Adrenal gland (tissue), 19 donors: ENCODE measurements at regions of chr1 and their contacts with region 1.

Region 1: DNA sequence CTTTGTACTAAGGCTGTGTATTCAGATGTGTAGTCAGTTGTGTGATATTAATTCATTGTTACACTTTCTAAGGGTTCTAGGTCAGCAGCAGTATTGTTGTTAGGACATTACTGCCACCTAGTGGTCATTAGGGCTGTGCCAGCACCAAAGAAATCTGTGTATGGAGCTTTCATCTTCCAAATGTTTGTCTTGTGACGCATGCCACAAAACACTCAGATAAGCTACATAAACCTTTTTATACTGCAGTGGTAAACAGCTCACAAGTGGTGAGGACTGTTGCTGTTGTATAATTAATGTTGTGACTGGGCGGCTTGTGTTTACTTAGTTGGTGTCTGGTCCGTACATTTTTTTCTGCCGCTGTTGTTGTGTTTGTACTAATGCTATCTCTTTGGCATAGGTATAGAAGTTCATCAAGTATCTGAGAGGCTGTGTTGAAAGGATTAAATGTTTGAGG is 51.7 kb downstream of the S1PR1 start:
- DNase-seq: peak; percentile 72 to 92 (median 77)
- H3K4me3 ChIP-seq: no peak overlapping the region
- H3K27ac ChIP-seq: no peak overlapping the region
- H3K4me1 ChIP-seq: peaks cover 0 to 12% of the 10 kb centered on the region in 2 donors
- H3K27me3 ChIP-seq: no peaks in the 10 kb centered on the region
- CTCF ChIP-seq: peak; percentile 87 to 94 (median 92)
- POLR2A ChIP-seq: no peak

Region 2: GRCh38 chr1:100912019-100912418 is 376.5 kb before region 1 on chr1:
- intact Hi-C with region 1: loop called in 1 of 2 experiments (anchors 10 kb)
- DNase-seq: no peak
- H3K4me3 ChIP-seq: no peak overlapping the region
- H3K27ac ChIP-seq: no peak overlapping the region
- H3K4me1 ChIP-seq: peaks cover 0 to 4% of the 10 kb centered on the region in 2 donors
- H3K27me3 ChIP-seq: no peaks in the 10 kb centered on the region
- CTCF ChIP-seq: no peak
- POLR2A ChIP-seq: no peak

Region 3: DNA sequence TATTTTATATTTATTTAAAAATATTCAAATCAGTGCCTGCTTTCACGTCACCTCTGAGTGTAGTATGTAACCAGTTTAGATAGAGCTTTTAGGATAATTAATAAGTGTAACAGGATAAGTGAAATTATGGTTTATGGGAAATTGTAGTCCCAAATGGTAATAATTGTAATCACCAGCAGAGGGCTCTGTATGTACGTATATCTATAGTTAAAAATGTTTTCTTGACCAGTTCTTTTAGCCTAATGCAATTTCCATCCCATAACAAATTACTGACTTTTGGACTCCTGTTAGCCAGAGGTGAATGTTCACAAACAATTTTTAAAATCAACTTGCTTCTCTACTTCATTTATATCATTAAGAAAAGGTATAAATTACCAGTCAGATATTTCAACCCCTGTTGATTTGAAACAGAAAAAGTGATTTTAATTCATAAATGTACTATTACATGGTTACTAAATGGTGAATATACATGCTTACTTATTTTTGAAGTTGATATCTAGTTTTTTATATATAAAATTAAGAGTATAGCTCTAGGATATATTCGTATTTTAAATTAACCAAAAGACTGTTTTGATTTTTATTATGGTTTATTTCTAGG is 367.3 kb before region 1 on chr1:
- intact Hi-C with region 1: loop called (anchors 5 to 10 kb)
- DNase-seq: no peak
- H3K4me3 ChIP-seq: no peak overlapping the region
- H3K27ac ChIP-seq: no peak overlapping the region
- H3K4me1 ChIP-seq: peaks cover 0 to 10% of the 10 kb centered on the region in 2 donors
- H3K27me3 ChIP-seq: no peaks in the 10 kb centered on the region
- CTCF ChIP-seq: peak; percentile 58 to 83 (median 68)
- POLR2A ChIP-seq: no peak

Region 4: GRCh38 chr1:101238681-101239094 is 49.8 kb before region 1 on chr1:
- intact Hi-C with region 1: loop called in 1 of 2 experiments (anchors 5 kb)
- DNase-seq: peak; percentile 85 to 92 (median 89)
- H3K4me3 ChIP-seq: no peak overlapping the region
- H3K27ac ChIP-seq: peak overlapping the region in 3 of 5 donors; percentile 27 to 41 (median 30)
- H3K4me1 ChIP-seq: peaks cover 5 to 25% of the 10 kb centered on the region in 2 donors
- H3K27me3 ChIP-seq: no peaks in the 10 kb centered on the region
- CTCF ChIP-seq: peak; percentile 86 to 93 (median 90)
- POLR2A ChIP-seq: peak in 1 of 2 donors; percentile 44

Region 5: DNA sequence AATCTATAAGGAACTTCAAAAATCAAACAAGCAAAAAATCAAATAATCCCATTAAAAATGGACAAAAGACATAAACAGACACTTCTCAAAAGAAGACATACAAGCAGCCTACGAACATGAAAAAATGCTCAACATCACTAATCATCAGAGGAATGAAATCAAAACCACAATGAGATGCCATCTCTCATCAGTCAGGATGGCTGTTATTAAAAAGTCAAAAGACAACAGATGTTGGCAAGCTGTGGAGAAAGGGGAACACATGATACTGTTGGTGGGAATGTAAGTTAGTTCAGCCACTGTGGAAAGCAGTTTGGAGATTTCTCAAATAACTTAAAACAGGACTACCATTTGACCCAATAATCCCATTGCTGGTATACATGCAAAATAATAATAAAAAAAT is 174.7 kb after region 1 on chr1:
- intact Hi-C with region 1: no loop called
- DNase-seq: no peak
- H3K4me3 ChIP-seq: no peak overlapping the region
- H3K27ac ChIP-seq: no peak overlapping the region
- H3K4me1 ChIP-seq: no peaks in the 10 kb centered on the region
- H3K27me3 ChIP-seq: no peaks in the 10 kb centered on the region
- CTCF ChIP-seq: no peak
- POLR2A ChIP-seq: no peak